ENCODE measurements at regions of chr3 and their contacts with region 1.

Region 1: DNA sequence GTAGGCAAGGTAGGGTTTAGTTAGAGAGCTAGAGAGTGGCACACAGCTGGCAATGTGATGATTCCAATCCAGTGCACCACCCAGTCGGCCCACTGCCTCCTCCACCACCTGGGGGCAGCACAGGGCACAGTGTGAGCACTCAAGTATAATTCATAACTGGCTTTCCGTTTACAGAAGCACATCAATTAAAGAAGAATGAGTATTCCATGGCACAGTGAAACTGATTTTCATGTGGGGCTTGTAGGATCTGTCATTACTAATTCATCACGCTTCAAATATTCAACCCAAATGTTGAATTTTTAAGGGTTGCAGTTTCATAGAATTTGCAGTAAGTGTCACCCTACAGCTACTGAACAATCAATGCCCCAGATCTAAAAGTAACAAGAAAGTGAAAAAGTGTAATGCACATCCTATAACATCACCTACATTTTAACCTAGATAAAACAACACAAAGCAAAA is 149.9 kb downstream of the IGSF11 start:
- DNase-seq: peak; percentile 48 to 73 (median 65)
- H3K4me3 ChIP-seq: no peak overlapping the region
- H3K27ac ChIP-seq: no peak overlapping the region
- H3K4me1 ChIP-seq: no peaks in the 10 kb centered on the region
- H3K27me3 ChIP-seq: no peaks in the 10 kb centered on the region
- CTCF ChIP-seq: peak; percentile 71

Region 2: GRCh38 chr3:119099785-119100184 is 215.0 kb after region 1 on chr3:
- intact Hi-C with region 1: loop called (anchors 2 kb)
- DNase-seq: no peak
- H3K4me3 ChIP-seq: no peak overlapping the region
- H3K27ac ChIP-seq: no peak overlapping the region
- H3K4me1 ChIP-seq: no peaks in the 10 kb centered on the region
- H3K27me3 ChIP-seq: no peaks in the 10 kb centered on the region
- CTCF ChIP-seq: no peak

Measured in kidney (tissue), 22 donors.